Activated naive CD4-positive, alpha-beta T cell treated with anti-CD3 and anti-CD28 coated beads for 36 hours (primary cell): ENCODE measurements at regions of chr21 and their contacts with region 1.

Region 1: GRCh38 chr21:43775795-43776430 is at the start of gene CSTB:
- DNase-seq: peak; percentile 85
- H3K4me3 Mint-ChIP-seq: peak within 1 kb of the TSS; percentile 80
- H3K27ac Mint-ChIP-seq: peak within 1 kb of the TSS; percentile 51
- H3K4me1 Mint-ChIP-seq: peaks cover 38% of the 10 kb centered on the region
- H3K27me3 Mint-ChIP-seq: no peaks in the 10 kb centered on the region
- total RNA-seq, gene CSTB: 22.8 to 23.0 TPM

Region 2: DNA sequence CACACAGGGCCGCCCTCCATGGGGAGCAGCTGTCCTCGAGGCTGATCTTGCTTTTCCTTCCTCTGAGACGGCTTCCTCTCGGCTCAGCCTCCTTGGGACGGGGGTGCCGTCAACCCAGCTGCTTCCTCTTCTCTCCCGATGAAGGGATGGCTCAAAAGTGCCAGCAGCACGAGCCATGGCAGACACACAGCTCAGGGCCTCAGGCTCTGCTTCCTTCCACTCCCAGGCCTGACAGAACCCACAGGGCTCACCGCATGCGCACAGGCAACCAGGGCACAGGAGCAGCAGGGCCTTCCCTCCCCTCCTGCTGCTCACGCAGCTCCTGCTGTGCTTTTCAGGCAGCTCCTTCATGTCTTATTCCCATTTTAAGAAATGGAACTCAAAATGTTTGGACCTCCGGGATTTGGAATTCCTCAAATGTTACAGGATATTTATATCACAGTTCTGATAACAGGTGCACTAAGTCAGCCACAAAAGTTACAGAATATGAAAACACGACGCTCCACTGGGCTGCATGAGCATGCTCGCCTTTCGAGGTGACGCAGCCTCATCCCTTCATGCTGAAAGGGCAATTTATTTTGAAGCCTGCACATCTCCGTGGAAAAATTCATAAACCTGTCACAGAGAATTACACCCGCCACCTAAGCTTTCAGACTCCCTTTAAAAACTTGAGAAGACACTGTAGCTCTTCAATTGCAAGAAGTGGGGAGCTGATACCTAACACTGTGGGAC is 201.0 kb before region 1 on chr21:
- CTCF ChIA-PET with region 1: no interaction called
- intact Hi-C with region 1: no loop called
- DNase-seq: no peak
- H3K4me3 Mint-ChIP-seq: no peak overlapping the region
- H3K27ac Mint-ChIP-seq: no peak overlapping the region
- H3K4me1 Mint-ChIP-seq: no peaks in the 10 kb centered on the region
- H3K27me3 Mint-ChIP-seq: no peaks in the 10 kb centered on the region

Region 3: DNA sequence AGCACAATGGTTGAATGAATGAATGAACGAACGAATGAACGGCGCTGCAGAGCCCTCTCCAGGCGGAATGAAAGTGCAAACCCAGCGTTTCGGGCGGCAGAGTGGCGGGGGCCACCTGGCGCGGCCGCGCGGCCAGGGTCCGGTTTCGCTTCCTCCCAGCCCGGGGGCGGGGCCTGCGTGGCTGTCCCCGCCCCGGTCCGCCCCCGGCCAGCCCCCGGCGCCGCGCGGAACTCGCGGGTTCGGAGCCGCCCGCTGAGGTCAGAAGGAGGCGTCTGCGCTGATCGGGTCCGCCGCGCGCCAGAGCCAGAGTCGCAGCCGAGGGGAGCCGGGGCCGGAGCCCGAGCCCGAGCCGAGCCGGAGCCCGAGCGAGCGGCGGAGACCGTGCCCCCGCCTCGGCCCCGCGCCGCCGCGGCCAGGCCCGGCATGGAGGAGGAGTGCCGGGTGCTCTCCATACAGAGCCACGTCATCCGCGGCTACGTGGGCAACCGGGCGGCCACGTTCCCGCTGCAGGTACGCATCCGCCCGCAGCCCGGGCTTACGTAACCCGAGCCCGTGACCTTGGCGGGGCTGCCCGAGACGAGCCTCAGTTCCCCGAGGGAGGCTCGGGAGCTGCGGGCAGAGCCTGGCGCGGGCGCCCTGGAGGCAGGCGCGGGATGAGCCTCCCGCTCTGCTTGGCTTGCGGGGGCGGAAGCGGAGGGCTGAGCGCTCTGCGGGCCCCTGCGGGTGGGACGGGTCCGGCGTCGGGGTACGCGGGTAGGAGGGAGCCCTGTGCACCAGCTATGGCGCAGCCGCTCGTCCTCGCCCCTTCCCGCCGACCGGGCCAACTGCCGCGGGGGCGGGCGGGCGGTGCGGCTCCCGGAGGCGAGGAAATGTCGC is 56.8 kb before region 1 on chr21 and contains the start of gene PDXK:
- CTCF ChIA-PET with region 1: no interaction called
- intact Hi-C with region 1: loop called (anchors 5 kb)
- DNase-seq: peak; percentile 82
- H3K4me3 Mint-ChIP-seq: peak within 1 kb of the TSS; percentile 84
- H3K27ac Mint-ChIP-seq: peak within 1 kb of the TSS; percentile 61
- H3K4me1 Mint-ChIP-seq: peaks cover 21% of the 10 kb centered on the region
- H3K27me3 Mint-ChIP-seq: peaks cover 2% of the 10 kb centered on the region
- total RNA-seq, gene PDXK: 125 to 133 TPM

Region 4: GRCh38 chr21:43789276-43790009 is 13.5 kb after region 1 on chr21 and contains the start of gene RRP1:
- CTCF ChIA-PET with region 1: interaction called, 6 read pairs
- intact Hi-C with region 1: loop called (anchors 1 kb)
- DNase-seq: peak; percentile 91
- H3K4me3 Mint-ChIP-seq: peak within 1 kb of the TSS; percentile 90
- H3K27ac Mint-ChIP-seq: peak within 1 kb of the TSS; percentile 75
- H3K4me1 Mint-ChIP-seq: peaks cover 28% of the 10 kb centered on the region
- H3K27me3 Mint-ChIP-seq: no peaks in the 10 kb centered on the region
- total RNA-seq, gene RRP1: 33.6 to 35.5 TPM

Region 5: DNA sequence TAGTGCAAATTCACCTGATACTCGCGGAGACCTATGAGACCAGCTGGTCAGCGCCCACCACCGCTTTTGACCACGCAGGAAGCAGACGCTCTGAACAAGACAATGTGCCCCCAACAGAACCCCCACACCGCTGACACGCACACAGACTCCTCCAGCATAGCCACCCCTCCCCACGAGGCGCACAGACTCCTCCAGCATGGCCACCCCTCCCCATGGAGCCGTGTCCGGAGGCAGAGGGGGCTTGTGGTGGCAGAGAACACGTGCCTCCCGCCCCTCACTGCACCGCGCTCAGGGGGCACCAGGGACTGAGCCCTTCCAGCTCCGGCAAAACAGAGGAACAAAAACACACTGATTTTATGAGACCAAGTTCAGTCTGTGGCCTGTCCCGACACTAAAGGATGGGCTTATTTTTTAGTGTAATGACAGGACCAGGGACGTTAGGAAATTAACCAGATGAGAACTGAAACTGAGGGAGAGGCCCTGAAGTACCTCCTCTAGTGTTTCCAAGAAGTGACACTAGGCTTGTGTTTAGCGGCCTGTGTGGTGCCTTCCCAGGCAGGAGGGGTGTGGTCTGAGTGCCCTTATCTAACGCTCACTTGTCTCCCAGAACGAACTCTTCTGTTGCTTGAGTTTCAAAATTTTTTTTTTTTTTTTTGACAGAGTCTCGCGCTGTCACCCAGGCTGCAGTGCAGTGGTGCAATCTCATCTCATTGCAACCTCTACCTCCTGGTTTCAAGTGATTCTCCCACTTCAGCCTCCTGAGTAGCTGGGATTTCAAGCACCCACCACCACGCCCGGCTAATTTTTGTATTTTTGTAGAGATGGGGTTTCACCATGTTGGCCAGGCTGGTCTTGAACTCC is 79.1 kb after region 1 on chr21:
- CTCF ChIA-PET with region 1: no interaction called
- intact Hi-C with region 1: no loop called
- DNase-seq: peak; percentile 83
- H3K4me3 Mint-ChIP-seq: no peak overlapping the region
- H3K27ac Mint-ChIP-seq: peak overlapping the region; percentile 66
- H3K4me1 Mint-ChIP-seq: peaks cover 20% of the 10 kb centered on the region
- H3K27me3 Mint-ChIP-seq: peaks cover 10% of the 10 kb centered on the region